Activated naive CD4-positive, alpha-beta T cell treated with anti-CD3 and anti-CD28 coated beads, Interleukin-2, amount 10 ng/mL, durations not matched to agents 7 days and 5 days (primary cell): ENCODE measurements at regions of chr17 and their contacts with region 1.

Region 1: GRCh38 chr17:77247048-77247541 is 106.3 kb downstream of the SEC14L1 start:
- DNase-seq: peak; percentile 89
- H3K4me3 Mint-ChIP-seq: peak overlapping the region; percentile 52
- H3K27ac Mint-ChIP-seq: peak overlapping the region; percentile 49
- H3K4me1 Mint-ChIP-seq: peaks cover 19% of the 10 kb centered on the region
- H3K27me3 Mint-ChIP-seq: peaks cover 55% of the 10 kb centered on the region

Region 2: DNA sequence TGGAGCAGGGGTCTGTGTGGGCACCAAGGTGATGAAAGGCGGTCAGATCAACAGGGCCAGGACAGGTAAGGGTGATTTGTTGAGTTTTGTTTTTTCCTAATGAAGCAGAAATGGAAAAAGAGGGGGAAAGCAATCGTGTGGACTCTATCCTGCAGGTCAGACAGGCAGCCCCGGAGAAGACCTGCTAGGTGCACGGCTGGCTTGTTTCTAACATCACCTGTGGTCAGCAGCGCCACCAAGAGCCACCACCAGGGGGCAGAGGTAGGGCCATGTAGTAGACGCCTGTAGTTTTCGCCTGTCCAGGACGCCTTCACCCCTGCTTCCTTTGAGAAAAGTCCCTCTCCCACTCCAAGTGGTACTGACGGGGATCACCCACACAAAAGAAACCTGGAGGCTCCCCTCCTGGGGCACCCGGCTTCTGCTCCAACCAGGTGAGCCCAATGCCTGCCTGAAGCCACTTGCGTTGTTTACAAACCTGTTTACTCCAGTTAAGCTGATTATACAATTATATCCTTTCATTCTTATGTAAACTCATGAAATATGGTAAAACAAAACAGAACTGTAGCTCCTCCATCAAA is 160.6 kb before region 1 on chr17:
- CTCF ChIA-PET with region 1: interaction called, 18 read pairs
- DNase-seq: peak; percentile 85
- H3K4me3 Mint-ChIP-seq: no peak overlapping the region
- H3K27ac Mint-ChIP-seq: no peak overlapping the region
- H3K4me1 Mint-ChIP-seq: peaks cover 51% of the 10 kb centered on the region
- H3K27me3 Mint-ChIP-seq: peaks cover 26% of the 10 kb centered on the region

Region 3: GRCh38 chr17:77206158-77206956 is 40.7 kb before region 1 on chr17:
- CTCF ChIA-PET with region 1: no interaction called
- DNase-seq: no peak
- H3K4me3 Mint-ChIP-seq: no peak overlapping the region
- H3K27ac Mint-ChIP-seq: no peak overlapping the region
- H3K4me1 Mint-ChIP-seq: no peaks in the 10 kb centered on the region
- H3K27me3 Mint-ChIP-seq: no peaks in the 10 kb centered on the region

Region 4: DNA sequence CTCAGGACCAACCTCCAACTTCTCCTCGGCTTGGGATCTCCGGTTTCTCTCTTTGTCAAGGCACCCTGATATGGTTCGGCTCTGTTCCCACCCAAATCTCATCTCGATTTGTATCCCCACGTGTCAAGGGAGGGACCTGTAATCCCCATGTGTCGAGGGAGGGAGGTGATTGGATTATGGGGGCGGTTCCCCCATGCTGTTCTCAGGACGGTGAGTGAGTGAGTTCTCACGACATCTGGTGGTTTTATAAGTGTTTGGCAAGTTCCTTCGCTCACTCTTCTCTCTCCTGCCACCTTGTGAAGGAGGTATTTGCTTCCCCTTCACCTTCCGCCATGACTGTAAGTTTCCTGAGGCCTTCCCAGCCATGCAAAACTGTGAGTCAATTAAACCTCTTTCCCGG is 11.5 kb after region 1 on chr17:
- CTCF ChIA-PET with region 1: no interaction called
- DNase-seq: no peak
- H3K4me3 Mint-ChIP-seq: no peak overlapping the region
- H3K27ac Mint-ChIP-seq: no peak overlapping the region
- H3K4me1 Mint-ChIP-seq: no peaks in the 10 kb centered on the region
- H3K27me3 Mint-ChIP-seq: peaks cover 43% of the 10 kb centered on the region